CD14-positive monocyte (primary cell): ENCODE measurements at regions of chr17 and their contacts with region 1.

Region 1: GRCh38 chr17:412211-413015 is 59.8 kb upstream of the RPH3AL start:
- DNase-seq: peak; percentile 59 to 64 (median 59)
- H3K4me3 ChIP-seq: peak overlapping the region in 2 of 3 experiments; percentile 5 to 64
- H3K4me3 Mint-ChIP-seq: peak overlapping the region; percentile 75 to 90
- H3K27ac ChIP-seq: peak overlapping the region; percentile 30 to 56
- H3K27ac Mint-ChIP-seq: peak overlapping the region; percentile 65 to 91 (median 89)
- H3K4me1 ChIP-seq: peaks cover 51 to 56% of the 10 kb centered on the region in 2 donors
- H3K4me1 Mint-ChIP-seq: peaks cover 61% of the 10 kb centered on the region
- H3K27me3 ChIP-seq: no peaks in the 10 kb centered on the region
- H3K27me3 Mint-ChIP-seq: peaks cover 0 to 5% (median 0%) of the 10 kb centered on the region in 3 donors
- CTCF ChIP-seq: peak; percentile 88

Region 2: DNA sequence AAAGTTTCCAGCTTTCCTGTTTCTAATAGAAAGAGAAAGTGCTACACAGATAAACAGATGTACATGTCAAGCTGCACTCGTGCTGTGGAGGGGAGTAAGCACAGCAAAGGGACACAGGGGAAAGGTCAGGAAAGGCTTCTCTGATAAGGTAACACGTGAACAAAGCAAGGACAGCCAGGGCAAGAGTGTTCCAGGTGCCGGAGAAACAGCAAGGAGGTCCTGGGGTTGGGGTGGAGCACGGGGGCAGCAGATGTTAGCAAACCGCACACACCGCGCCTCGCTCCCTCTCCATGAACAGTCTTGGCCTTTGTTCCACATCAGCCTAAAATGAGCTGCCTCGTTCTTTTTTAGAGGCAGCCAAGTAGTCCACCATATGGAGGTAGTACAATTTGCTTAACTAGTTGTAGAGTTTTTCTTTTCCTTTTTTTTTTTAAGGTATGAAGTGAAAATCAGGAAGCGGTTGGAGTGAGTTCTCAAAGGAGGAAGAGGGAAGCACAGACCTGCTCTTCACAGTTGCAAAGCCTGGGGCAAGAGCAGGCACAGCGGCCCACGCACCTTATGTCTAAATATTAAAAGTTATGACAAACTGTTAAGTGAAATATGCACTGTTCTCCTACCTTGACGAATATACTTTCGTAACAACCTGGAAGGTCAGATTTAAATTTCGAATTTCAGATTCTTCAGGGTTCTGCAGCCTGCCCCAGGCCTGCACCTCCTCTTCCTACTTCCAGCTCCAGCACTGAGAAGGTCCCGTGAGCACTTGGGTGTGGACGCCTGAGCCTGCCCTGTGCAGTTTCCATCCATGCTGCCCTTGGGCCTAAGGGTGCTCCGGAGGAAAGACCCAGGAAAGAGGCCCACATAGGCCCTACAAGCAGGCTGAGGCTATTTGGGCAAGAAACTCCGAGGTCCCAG is 18.4 kb before region 1 on chr17:
- intact Hi-C with region 1: no loop called
- DNase-seq: peak in 1 of 3 donors; percentile 27
- H3K4me3 ChIP-seq: peak overlapping the region in 1 of 3 experiments; percentile 18
- H3K4me3 Mint-ChIP-seq: peak overlapping the region; percentile 67 to 77
- H3K27ac ChIP-seq: no peak overlapping the region
- H3K27ac Mint-ChIP-seq: peak overlapping the region in 3 of 7 donors; percentile 15 to 75 (median 52)
- H3K4me1 ChIP-seq: peaks cover 24% of the 10 kb centered on the region in 2 donors
- H3K4me1 Mint-ChIP-seq: peaks cover 25% of the 10 kb centered on the region
- H3K27me3 ChIP-seq: no peaks in the 10 kb centered on the region
- H3K27me3 Mint-ChIP-seq: peaks cover 2 to 8% (median 8%) of the 10 kb centered on the region in 3 donors
- CTCF ChIP-seq: no peak

Region 3: GRCh38 chr17:700504-701094 is 288.2 kb after region 1 on chr17:
- intact Hi-C with region 1: loop called (anchors 1 kb)
- DNase-seq: peak; percentile 29 to 46 (median 37)
- H3K4me3 ChIP-seq: no peak overlapping the region
- H3K4me3 Mint-ChIP-seq: no peak overlapping the region
- H3K27ac ChIP-seq: no peak overlapping the region
- H3K27ac Mint-ChIP-seq: peak overlapping the region in 4 of 7 donors; percentile 28 to 86 (median 65)
- H3K4me1 ChIP-seq: peaks cover 0 to 6% of the 10 kb centered on the region in 2 donors
- H3K4me1 Mint-ChIP-seq: peaks cover 7% of the 10 kb centered on the region
- H3K27me3 ChIP-seq: no peaks in the 10 kb centered on the region
- H3K27me3 Mint-ChIP-seq: no peaks in the 10 kb centered on the region
- CTCF ChIP-seq: peak; percentile 80